ENCODE measurements at regions of chr20 and their contacts with region 1.

Region 1: DNA sequence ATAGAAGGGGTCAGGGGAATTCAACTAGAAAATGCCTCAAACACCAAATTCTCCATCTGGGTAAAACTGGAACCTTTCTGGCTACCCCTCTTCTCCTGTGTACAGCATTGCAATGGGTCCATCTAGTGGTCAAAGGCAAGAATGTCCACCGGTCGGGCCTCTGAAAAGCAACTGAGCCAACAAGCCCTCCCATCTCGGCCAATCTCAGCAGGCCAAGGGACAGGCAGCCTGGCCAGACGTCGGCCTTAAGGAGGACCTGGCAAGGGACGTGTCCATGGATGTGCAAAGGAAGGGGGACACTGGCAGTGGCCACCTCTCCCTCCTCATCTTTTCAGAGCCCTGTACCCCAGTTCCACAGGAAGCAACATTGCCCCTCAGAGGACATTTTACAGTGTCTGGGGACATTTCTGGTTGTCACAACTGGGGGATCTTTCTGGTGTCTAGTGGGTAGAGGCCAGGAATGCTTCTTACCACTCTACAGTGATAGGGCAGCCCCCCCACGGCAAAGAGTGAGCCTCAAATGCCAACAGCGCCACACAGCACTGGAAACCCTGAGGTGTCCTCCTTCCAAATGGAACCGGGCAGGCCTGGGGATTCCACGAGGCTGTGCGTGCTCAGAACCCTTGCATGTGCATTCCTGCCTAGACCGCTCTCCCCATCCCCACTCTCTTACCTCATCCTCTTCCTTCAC is 99.8 kb upstream of the FOXA2 start:
- DNase-seq: peak in 1 of 2 donors; percentile 37
- ATAC-seq: peak in 2 of 3 donors; percentile 64 to 67
- H3K4me3 ChIP-seq: no peak overlapping the region
- H3K4me3 Mint-ChIP-seq: no peak overlapping the region
- H3K27ac ChIP-seq: no peak overlapping the region
- H3K27ac Mint-ChIP-seq: no peak overlapping the region
- H3K4me1 ChIP-seq: peaks cover 8% of the 10 kb centered on the region
- H3K4me1 Mint-ChIP-seq: peaks cover 0 to 5% of the 10 kb centered on the region in 2 donors
- H3K27me3 ChIP-seq: no peaks in the 10 kb centered on the region
- H3K27me3 Mint-ChIP-seq: peaks cover 0 to 3% of the 10 kb centered on the region in 2 donors
- CTCF ChIP-seq: peak; percentile 43

Region 2: GRCh38 chr20:22339091-22339881 is 344.9 kb before region 1 on chr20:
- intact Hi-C with region 1: loop called (anchors 1 kb)
- DNase-seq: peak in 1 of 2 donors; percentile 56
- ATAC-seq: no peak
- H3K4me3 ChIP-seq: no peak overlapping the region
- H3K4me3 Mint-ChIP-seq: no peak overlapping the region
- H3K27ac ChIP-seq: no peak overlapping the region
- H3K27ac Mint-ChIP-seq: no peak overlapping the region
- H3K4me1 ChIP-seq: no peaks in the 10 kb centered on the region
- H3K4me1 Mint-ChIP-seq: peaks cover 4 to 6% of the 10 kb centered on the region in 2 donors
- H3K27me3 ChIP-seq: no peaks in the 10 kb centered on the region
- H3K27me3 Mint-ChIP-seq: peaks cover 2 to 8% of the 10 kb centered on the region in 2 donors
- CTCF ChIP-seq: peak; percentile 61

Region 3: DNA sequence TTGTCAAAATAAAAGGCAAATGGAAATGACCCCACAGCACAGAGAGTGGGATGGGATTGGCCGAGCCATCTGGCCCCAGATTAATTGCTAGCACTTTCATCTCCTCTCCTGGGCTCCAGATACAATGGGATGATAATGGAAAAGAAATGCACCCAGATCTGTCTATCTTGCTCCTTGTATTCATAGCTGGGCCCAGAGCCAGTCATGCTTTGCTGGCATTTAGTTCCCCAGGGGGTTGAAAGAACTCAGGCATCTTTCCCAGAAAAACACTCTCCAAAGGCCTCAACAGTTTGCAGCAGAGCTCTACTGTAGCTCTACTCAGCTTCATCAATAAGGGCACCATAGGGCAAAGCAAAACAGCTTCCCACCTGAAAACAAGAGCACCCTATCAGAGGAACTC is 16.1 kb after region 1 on chr20:
- intact Hi-C with region 1: no loop called
- DNase-seq: no peak
- ATAC-seq: no peak
- H3K4me3 ChIP-seq: no peak overlapping the region
- H3K4me3 Mint-ChIP-seq: no peak overlapping the region
- H3K27ac ChIP-seq: no peak overlapping the region
- H3K27ac Mint-ChIP-seq: no peak overlapping the region
- H3K4me1 ChIP-seq: no peaks in the 10 kb centered on the region
- H3K4me1 Mint-ChIP-seq: no peaks in the 10 kb centered on the region
- H3K27me3 ChIP-seq: no peaks in the 10 kb centered on the region
- H3K27me3 Mint-ChIP-seq: peaks cover 0 to 3% of the 10 kb centered on the region in 2 donors
- CTCF ChIP-seq: no peak

Region 4: DNA sequence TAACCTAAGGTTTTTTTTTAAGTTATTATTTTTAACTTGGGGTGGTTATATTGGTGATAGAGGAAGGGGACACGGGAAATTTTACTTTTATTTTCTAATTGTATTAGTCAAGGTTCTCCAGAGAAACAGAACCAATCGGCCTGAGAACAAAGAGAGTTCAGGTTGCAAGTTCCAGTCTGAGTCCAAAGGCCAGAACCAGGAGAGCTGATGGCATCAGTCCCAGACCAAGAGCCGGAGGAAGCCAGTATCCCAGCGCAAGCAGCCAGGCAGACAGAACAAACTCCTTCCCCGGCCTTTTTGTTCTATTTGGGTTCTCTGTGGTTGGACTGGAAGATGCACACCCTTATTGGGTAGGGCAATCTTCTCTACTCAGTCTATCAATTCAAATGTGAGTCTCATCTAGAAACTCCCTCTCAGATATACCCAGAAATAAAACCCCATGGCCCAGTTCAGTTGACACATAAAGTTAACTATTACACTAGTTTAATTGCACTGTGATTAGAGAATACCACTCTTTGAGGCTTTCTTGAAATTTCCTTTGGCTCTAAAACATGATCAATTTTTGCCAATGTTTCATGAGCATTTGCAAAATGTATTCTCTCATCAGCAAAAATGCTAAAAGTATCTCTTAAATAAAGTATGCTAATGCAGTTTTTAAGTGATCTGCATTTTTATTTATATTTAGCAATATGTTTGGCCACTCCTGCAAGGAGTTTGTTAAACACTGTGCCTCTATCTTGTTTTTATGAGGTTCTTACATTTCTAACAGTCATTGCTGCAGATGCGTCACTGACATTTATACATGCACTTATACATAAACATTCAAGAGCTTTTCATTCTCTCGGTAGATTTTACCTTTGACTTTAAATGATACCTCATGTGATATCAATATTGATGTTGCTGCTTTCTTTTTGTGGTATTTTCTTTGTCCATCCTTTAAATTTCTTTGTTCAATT is 247.7 kb after region 1 on chr20:
- intact Hi-C with region 1: no loop called
- DNase-seq: no peak
- ATAC-seq: no peak
- H3K4me3 ChIP-seq: no peak overlapping the region
- H3K4me3 Mint-ChIP-seq: no peak overlapping the region
- H3K27ac ChIP-seq: no peak overlapping the region
- H3K27ac Mint-ChIP-seq: no peak overlapping the region
- H3K4me1 ChIP-seq: no peaks in the 10 kb centered on the region
- H3K4me1 Mint-ChIP-seq: no peaks in the 10 kb centered on the region
- H3K27me3 ChIP-seq: no peaks in the 10 kb centered on the region
- H3K27me3 Mint-ChIP-seq: no peaks in the 10 kb centered on the region
- CTCF ChIP-seq: no peak

Measured in natural killer cell (primary cell).